CD8-positive, alpha-beta T cell (primary cell): ENCODE measurements at regions of chr7 and their contacts with region 1.

Region 1: DNA sequence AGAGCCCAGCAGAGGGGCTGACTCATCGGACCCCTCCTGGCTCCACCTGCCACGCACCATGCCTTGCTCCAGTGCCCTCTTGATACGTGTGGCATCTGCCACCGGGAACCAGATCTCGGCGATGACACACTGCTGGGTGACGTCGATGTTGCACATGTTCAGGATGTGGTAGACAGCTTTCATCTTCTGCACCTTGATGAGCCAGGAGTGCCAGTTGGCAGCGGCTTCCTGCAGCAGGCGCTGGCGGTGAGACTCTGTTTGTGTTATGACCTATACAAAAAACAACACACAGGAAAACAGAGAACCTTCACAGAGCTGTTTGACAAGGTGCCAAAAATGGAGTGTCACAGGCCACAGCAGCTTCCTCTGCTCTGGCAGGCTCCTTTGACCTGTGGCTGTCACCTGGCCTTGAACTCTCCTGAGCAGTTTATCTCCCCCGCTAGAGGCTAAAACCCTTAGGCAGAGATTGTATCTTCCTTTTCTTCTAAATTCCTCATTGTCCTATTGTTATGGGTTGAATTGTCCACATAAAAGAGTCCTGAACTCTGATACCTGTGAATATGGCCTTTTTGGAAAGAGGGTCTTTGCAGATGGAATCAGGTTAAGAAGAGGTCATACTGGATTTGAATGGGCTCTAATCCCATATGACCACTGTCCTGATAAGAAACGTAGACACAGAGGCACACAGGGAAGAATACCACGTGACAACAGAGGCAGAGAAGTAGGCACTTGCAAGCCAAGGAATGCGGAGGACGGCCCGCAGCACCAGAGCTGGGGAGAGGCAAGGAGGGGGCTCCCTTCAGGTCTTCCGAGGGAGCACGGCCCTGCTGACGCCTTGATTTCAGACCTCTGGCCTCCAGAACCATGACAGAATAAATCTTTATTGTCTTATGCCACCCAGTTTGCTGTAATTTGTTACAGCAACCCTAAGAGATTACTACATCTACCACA is 45.0 kb upstream of the TMEM213 start:
- DNase-seq: peak; percentile 85 to 99 (median 91)
- ATAC-seq: peak; percentile 91
- H3K4me3 ChIP-seq: peak overlapping the region in 1 of 2 experiments; percentile 12
- H3K4me3 Mint-ChIP-seq: peak overlapping the region; percentile 49
- H3K27ac ChIP-seq: peak overlapping the region; percentile 53 to 75
- H3K27ac Mint-ChIP-seq: peak overlapping the region; percentile 95
- H3K4me1 ChIP-seq: peaks cover 33% of the 10 kb centered on the region
- H3K4me1 Mint-ChIP-seq: peaks cover 63% of the 10 kb centered on the region
- H3K27me3 ChIP-seq: no peaks in the 10 kb centered on the region
- H3K27me3 Mint-ChIP-seq: no peaks in the 10 kb centered on the region
- CTCF ChIP-seq: no peak

Region 2: DNA sequence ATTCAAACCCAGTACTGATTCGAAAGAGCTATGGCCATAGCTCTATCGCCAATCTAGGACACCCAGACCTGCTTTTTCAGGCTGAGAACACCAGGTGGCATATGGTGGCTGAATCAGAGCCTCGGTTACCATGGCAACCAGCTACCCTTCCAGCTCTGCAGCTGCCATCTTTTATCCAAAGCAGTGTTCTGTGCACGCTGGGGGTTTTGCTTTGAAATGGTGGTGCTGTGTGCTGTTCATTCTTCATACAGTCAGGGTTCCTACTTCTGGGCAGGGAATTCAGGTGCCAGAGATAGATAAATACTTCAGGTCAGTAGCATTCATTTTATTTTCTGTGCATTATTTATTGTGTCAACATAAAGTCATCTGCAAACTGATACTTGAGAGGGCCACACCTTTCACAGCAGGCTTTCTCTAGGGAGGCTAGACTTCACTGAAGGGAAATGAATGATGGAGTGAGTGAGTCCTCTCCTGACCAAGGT is 591.2 kb before region 1 on chr7:
- CTCF ChIA-PET with region 1: no interaction called
- POLR2A ChIA-PET with region 1: no interaction called
- intact Hi-C with region 1: loop called in 1 of 2 experiments (anchors 5 kb)
- DNase-seq: peak; percentile 42 to 93 (median 74)
- ATAC-seq: peak; percentile 99
- H3K4me3 ChIP-seq: no peak overlapping the region
- H3K4me3 Mint-ChIP-seq: no peak overlapping the region
- H3K27ac ChIP-seq: no peak overlapping the region
- H3K27ac Mint-ChIP-seq: no peak overlapping the region
- H3K4me1 ChIP-seq: peaks cover 5% of the 10 kb centered on the region
- H3K4me1 Mint-ChIP-seq: no peaks in the 10 kb centered on the region
- H3K27me3 ChIP-seq: no peaks in the 10 kb centered on the region
- H3K27me3 Mint-ChIP-seq: peaks cover 3% of the 10 kb centered on the region
- CTCF ChIP-seq: peak; percentile 69

Region 3: DNA sequence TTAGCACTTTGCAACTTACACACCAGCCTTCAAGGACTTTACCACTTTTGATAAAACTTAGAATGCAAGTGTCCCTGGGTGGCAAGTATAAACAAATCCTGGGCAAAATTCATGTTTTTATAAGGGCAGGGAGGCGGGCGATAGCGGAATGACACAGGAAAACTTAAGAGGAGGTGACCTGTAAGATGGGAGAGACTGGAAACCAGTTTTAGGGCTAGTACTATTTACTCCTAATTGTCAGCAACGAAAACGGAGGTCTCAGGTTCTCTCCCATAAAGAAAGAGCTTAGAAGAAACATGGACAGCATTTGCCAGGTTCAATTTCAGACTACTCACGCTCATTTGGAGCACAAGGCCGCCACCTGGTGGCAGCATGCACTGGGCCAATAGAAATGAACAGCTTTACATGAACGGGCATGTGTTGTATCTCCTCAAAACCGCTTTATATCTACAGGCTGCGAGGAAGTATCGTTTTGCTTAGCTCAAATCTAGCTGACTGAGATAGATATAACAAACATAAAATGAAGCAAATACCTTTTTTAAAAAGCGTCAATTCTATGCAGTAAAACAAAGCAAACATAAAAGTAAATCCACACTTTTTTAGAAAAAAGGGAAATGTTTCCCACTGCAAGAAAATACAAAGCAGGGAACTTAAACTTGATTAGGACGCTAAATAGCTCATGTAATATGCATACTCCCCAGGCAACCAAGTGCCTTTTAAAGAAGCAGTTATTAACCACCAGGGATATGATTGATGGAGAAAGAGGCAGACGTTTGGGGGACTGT is 14.1 kb before region 1 on chr7:
- CTCF ChIA-PET with region 1: interaction called, 36 read pairs
- POLR2A ChIA-PET with region 1: interaction called, 6 read pairs
- intact Hi-C with region 1: loop called in 1 of 2 experiments (anchors 1 kb)
- DNase-seq: peak; percentile 68 to 90 (median 84)
- ATAC-seq: peak; percentile 99
- H3K4me3 ChIP-seq: no peak overlapping the region
- H3K4me3 Mint-ChIP-seq: no peak overlapping the region
- H3K27ac ChIP-seq: no peak overlapping the region
- H3K27ac Mint-ChIP-seq: no peak overlapping the region
- H3K4me1 ChIP-seq: no peaks in the 10 kb centered on the region
- H3K4me1 Mint-ChIP-seq: peaks cover 3% of the 10 kb centered on the region
- H3K27me3 ChIP-seq: no peaks in the 10 kb centered on the region
- H3K27me3 Mint-ChIP-seq: no peaks in the 10 kb centered on the region
- CTCF ChIP-seq: peak; percentile 94

Region 4: GRCh38 chr7:138903186-138903820 is 150.5 kb after region 1 on chr7:
- CTCF ChIA-PET with region 1: no interaction called
- POLR2A ChIA-PET with region 1: no interaction called
- intact Hi-C with region 1: loop called in 1 of 2 experiments (anchors 1 kb)
- DNase-seq: peak; percentile 34 to 89 (median 71)
- ATAC-seq: peak; percentile 94
- H3K4me3 ChIP-seq: peak overlapping the region in 1 of 2 experiments; percentile 20
- H3K4me3 Mint-ChIP-seq: peak overlapping the region; percentile 78
- H3K27ac ChIP-seq: no peak overlapping the region
- H3K27ac Mint-ChIP-seq: peak overlapping the region; percentile 90
- H3K4me1 ChIP-seq: peaks cover 39% of the 10 kb centered on the region
- H3K4me1 Mint-ChIP-seq: peaks cover 49% of the 10 kb centered on the region
- H3K27me3 ChIP-seq: peaks cover 0 to 2% of the 10 kb centered on the region in 2 experiments
- H3K27me3 Mint-ChIP-seq: peaks cover 12% of the 10 kb centered on the region
- CTCF ChIP-seq: no peak

Region 5: GRCh38 chr7:139118234-139118804 is 365.5 kb after region 1 on chr7:
- CTCF ChIA-PET with region 1: interaction called, 3 read pairs
- POLR2A ChIA-PET with region 1: no interaction called
- intact Hi-C with region 1: loop called in 1 of 2 experiments (anchors 10 kb)
- DNase-seq: peak in 1 of 9 experiments; percentile 21
- ATAC-seq: no peak
- H3K4me3 ChIP-seq: peak overlapping the region in 1 of 2 experiments; percentile 33
- H3K4me3 Mint-ChIP-seq: peak overlapping the region; percentile 43
- H3K27ac ChIP-seq: peak overlapping the region in 1 of 2 experiments; percentile 38
- H3K27ac Mint-ChIP-seq: peak overlapping the region; percentile 88
- H3K4me1 ChIP-seq: peaks cover 27% of the 10 kb centered on the region
- H3K4me1 Mint-ChIP-seq: peaks cover 36% of the 10 kb centered on the region
- H3K27me3 ChIP-seq: no peaks in the 10 kb centered on the region
- H3K27me3 Mint-ChIP-seq: no peaks in the 10 kb centered on the region
- CTCF ChIP-seq: no peak